H1 (cell line): ENCODE measurements at regions of chr19 and their contacts with region 1.

Region 1: DNA sequence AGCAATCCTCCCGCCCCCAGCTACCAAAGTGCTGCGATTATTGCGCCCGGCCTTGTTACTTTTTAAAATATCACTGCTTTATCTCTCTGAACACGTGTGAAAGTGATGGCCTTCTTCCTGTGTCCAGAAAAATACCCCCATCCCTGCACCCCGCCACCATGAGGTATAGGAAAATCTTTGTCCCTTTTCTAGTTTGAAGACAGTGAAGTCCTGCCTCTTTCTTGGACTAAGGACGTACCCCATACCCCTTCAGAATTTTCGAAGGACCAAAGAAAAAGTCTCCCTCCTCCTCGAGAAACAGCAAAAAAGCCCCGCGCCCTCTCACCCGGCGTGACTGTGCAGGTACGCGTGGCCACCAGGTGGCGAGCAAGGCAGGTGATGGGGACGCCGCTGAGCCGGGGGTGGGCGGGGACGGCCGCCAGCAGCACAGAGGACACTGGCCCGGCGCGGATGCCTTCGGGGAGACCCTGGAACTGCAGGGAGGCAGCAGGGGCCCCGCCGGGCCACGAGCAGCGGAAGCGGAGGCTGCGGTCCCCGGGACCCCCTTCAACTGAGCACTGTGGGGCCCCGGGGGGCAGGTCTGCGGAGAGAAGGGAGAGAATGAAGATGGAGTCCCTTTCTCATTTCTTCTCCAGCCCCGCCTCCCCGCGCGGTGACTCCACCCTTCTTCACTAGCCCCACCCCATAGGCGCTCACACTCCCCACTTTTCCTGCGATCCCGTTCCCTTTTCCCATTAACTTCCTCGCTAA is 3.2 kb downstream of the VSIG10L start:
- DNase-seq: peak; percentile 39 to 95
- H3K4me3 ChIP-seq: peak overlapping the region; percentile 56 to 72 (median 66)
- H3K27ac ChIP-seq: 0 out of 2 replicates have a peak overlapping the region, but pooled peaks have one; percentile 41
- H3K4me1 ChIP-seq: peaks cover 0 to 20% (median 16%) of the 10 kb centered on the region in 4 experiments; a peak in 6 of 7 replicates
- H3K27me3 ChIP-seq: peaks cover 0 to 18% (median 11%) of the 10 kb centered on the region in 4 experiments; a peak in 5 of 7 replicates
- CTCF ChIP-seq: peak; percentile 81 to 94 (median 88)
- EP300 ChIP-seq: no peak
- POLR2A ChIP-seq: peak in 1 of 2 experiments; percentile 61; a peak in 2 of 3 replicates
- RAD21 ChIP-seq: peak; percentile 66 to 77

Region 2: DNA sequence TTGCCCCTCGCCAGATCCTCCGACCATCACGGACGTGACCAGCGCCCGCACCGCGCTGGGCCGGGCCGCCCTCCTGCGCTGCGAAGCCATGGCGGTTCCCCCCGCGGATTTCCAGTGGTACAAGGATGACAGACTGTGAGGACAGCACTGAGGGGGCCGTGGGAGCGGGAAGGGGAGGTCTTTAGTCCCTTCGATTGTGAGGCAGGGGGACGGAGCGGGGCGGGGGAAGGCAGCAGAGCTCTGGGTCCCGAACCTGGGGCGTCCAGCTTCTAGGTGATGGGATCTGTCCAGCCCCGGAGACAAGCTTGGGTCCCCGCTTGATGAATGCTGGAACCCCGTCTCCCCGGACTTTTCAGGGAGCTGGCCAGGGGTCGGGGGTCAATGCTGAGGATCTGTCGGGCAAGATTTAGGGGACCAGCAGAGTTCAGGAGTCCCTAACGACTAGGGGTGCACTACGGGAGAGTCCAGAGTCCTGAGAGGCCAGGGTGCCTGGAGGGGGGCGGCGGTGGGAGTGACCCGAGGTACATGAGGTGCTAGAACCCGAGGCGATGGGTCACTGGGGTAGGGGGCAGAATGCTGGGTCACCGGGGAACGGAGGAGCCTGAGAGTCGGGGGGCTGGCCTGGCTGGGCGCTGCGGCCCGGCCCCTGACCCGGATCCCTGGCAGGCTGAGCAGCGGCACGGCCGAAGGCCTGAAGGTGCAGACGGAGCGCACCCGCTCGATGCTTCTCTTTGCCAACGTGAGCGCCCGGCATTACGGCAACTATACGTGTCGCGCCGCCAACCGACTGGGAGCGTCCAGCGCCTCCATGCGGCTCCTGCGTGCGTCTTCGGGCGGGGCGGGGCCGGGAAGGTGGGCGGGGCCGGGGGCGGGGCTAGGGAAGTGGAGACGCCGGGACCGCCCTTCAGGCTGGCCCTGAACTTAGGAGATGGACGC is 11.4 kb before region 1 on chr19:
- CTCF ChIA-PET with region 1: interaction called, 8 read pairs
- POLR2A ChIA-PET with region 1: interaction called, 19 read pairs
- DNase-seq: peak; percentile 38 to 80
- H3K4me3 ChIP-seq: peak overlapping the region; percentile 21 to 62 (median 42)
- H3K27ac ChIP-seq: no peak overlapping the region
- H3K4me1 ChIP-seq: peaks cover 0 to 8% (median 5%) of the 10 kb centered on the region in 4 experiments; a peak in 4 of 7 replicates
- H3K27me3 ChIP-seq: peaks cover 0 to 6% (median 4%) of the 10 kb centered on the region in 4 experiments; a peak in 4 of 7 replicates
- CTCF ChIP-seq: peak in 2 of 3 experiments; percentile 32 to 59; a peak in 3 of 4 replicates
- EP300 ChIP-seq: no peak
- POLR2A ChIP-seq: peak in 1 of 2 experiments; percentile 58; a peak in 2 of 3 replicates
- RAD21 ChIP-seq: peak in 1 of 2 experiments; percentile 44; a peak in 2 of 4 replicates

Region 3: DNA sequence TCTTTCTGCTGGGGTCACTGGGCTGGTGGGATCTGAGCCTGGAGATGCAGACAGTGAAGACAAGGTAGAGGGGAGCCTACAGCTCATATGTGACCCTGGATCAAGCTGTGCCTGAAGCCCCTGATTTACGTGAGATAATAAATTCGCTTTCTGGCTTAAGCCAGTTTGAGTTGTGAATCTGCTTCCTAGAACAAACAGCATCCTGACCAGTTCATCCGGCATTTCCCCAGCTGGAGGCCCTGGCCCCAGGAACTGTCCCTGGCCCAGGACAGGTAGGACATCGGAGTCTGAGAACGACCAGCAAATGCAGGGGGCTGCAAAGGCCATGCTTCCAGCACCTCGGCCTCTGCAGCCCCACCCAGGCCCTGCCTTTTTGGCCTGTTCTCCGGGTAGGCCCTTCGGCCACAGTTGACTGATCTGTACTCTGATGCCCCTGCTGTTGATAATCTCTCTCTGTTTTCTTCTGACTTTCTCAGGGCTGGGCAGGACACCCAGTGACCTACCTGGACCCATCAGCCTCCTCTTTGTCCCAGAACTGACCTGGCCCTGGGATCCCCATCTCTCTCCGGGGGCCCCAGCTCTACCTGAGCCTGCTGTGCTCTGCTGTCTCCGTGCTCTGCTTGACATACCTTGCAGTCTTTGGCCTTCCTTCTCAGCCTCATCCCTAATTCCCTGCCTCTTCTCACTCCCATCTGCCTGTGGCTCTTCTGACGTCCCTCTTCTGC is 12.7 kb after region 1 on chr19:
- CTCF ChIA-PET with region 1: interaction called, 4 read pairs
- POLR2A ChIA-PET with region 1: interaction called, 12 read pairs
- DNase-seq: no peak
- H3K4me3 ChIP-seq: no peak overlapping the region
- H3K27ac ChIP-seq: no peak overlapping the region
- H3K4me1 ChIP-seq: peaks cover 3 to 9% (median 7%) of the 10 kb centered on the region in 4 experiments
- H3K27me3 ChIP-seq: no peaks in the 10 kb centered on the region
- CTCF ChIP-seq: no peak
- EP300 ChIP-seq: no peak
- POLR2A ChIP-seq: no peak
- RAD21 ChIP-seq: no peak

Region 4: DNA sequence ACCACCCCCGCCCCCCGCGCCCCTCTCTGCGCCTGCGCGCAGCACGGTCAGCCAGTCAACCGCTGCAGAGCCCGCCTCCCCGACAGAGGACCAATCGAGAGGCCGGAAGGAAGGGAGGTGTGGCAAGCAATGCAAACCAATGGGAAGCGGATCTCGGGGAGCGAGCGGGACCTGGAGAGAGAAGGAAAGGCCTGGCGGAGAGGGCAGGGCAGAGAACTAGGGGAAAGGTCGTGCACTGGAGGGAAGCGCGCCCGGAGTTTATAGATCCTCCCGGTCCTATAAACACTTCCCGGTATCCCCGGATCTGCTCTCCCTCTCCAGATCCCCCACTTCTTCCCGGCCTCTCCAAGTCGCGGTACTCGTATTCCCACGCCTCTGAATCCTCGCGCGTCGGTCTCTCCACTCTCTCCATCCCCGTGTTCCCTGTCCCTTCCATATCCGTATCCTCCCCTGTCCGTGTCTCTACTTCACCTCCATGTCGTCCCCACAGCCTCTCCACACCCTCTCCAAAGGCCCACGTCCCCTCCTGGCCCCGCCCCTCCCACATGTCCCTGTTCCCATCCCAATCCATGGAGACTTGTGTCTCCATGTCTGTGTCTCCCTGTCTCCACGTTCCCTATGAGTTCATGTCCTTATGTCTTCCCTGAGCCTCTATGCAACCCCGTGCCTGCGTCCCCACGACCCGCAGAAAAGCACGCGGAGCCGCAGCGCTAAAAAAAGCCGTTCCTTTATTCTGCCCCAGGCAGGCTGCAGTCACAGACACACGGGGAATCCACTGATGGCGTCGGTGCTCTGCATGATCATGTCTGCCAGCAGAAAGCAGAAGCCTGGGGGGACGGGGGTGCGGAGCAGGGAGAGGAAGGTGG is 27.9 kb after region 1 on chr19:
- CTCF ChIA-PET with region 1: interaction called, 7 read pairs
- POLR2A ChIA-PET with region 1: interaction called, 13 read pairs
- DNase-seq: peak; percentile 93 to 95
- H3K4me3 ChIP-seq: peak overlapping the region; percentile 79 to 97 (median 90)
- H3K27ac ChIP-seq: 0 out of 2 replicates have a peak overlapping the region, but pooled peaks have one; percentile 0
- H3K4me1 ChIP-seq: peaks cover 2 to 18% (median 11%) of the 10 kb centered on the region in 4 experiments
- H3K27me3 ChIP-seq: no peaks in the 10 kb centered on the region
- CTCF ChIP-seq: no peak
- EP300 ChIP-seq: no peak
- POLR2A ChIP-seq: peak in 1 of 2 experiments; percentile 90; a peak in 2 of 3 replicates
- RAD21 ChIP-seq: no peak

Region 5: DNA sequence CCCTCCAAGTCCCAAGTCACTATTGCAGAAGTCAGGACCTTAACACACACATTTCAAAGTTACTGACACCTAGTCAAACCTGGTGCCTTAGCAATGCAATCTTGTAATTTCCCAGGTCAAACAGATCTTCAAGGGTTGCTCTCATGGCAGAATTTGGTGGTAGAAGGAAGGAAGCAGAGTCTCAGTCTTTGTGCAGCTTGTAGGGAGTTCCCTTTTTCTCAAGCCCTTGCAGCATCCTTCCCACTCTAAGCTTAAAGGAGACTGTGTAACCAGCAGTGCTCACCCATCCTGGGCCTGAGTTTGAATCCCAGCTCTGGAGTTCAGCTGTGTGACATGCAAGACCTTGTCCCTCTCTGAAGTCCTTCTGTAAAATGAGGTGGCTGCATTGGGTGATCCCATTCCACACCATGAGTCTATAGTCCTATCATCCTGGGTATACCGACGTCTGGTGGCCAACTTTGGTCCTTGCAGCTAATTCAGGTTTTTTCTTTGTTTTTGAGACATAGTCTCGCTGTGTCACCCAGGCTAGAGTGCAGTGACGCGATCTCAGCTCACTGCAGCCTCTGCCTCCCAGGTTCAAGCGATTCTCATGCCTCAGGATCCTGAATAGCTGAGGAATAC is 68.9 kb after region 1 on chr19:
- CTCF ChIA-PET with region 1: interaction called, 11 read pairs
- POLR2A ChIA-PET with region 1: no interaction called
- DNase-seq: no peak
- H3K4me3 ChIP-seq: no peak overlapping the region
- H3K27ac ChIP-seq: no peak overlapping the region
- H3K4me1 ChIP-seq: peaks cover 0 to 13% (median 4%) of the 10 kb centered on the region in 4 experiments; a peak in 6 of 7 replicates
- H3K27me3 ChIP-seq: no peaks in the 10 kb centered on the region
- CTCF ChIP-seq: peak; percentile 7 to 77 (median 64)
- EP300 ChIP-seq: no peak
- POLR2A ChIP-seq: no peak
- RAD21 ChIP-seq: peak; percentile 54 to 69

Region 6: DNA sequence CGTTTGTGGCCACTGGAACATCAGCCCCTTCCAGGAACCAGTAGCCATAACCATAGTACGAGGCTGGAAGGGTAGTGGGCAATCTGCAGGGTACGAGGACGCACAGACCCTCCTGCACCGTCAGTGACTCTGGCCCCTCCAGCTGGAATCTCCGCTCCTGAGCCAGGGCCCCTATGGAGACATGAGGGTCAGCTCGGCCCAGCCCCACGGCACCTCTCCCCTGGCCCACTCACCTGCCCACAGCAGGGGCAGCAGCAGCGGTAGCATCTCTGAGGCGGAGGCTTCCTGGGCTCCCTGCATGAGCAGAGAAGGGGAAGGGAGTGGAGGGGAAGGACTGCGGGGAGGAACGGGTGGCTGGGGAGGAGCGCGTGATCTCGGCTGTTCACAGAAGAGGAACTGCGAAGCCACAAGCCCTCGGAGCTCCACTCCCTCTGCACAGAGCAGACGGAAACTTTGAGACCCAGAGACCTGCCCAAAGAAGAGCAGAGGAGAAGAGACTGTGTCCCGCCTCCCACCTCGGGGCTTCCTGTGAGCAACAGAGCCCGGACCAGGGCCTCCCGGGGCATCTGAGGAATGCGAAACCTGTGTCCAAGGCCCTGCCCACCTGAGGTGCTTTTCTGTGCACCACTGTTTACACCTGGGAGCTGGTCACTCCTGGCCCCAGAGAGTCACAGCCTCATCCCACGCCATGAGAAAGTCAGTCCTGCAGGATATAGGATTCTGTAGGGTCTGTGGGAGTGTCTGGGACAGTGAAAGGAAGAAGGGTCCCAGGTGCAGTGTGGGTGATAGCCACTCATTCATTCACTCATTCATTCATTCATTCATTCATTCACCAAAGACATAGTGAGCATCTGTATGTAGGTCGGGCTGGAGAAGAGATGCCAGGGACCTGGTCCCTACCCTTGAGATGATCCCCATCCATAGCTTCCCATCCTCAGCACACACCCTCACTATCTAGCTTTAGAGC is 192.9 kb after region 1 on chr19 and contains the start of gene SIGLEC6:
- CTCF ChIA-PET with region 1: no interaction called
- POLR2A ChIA-PET with region 1: no interaction called
- DNase-seq: no peak
- H3K4me3 ChIP-seq: no peak within 1 kb of the TSS
- H3K27ac ChIP-seq: no peak within 1 kb of the TSS
- H3K4me1 ChIP-seq: peaks cover 0 to 5% (median 0%) of the 10 kb centered on the region in 4 experiments; a peak in 1 of 7 replicates
- H3K27me3 ChIP-seq: no peaks in the 10 kb centered on the region
- CTCF ChIP-seq: no peak
- EP300 ChIP-seq: no peak
- POLR2A ChIP-seq: no peak
- RAD21 ChIP-seq: no peak
- total RNA-seq, gene SIGLEC6: not detected in 2 replicates